IMR-90 (cell line): ENCODE measurements at regions of chr1 and their contacts with region 1.

Region 1: DNA sequence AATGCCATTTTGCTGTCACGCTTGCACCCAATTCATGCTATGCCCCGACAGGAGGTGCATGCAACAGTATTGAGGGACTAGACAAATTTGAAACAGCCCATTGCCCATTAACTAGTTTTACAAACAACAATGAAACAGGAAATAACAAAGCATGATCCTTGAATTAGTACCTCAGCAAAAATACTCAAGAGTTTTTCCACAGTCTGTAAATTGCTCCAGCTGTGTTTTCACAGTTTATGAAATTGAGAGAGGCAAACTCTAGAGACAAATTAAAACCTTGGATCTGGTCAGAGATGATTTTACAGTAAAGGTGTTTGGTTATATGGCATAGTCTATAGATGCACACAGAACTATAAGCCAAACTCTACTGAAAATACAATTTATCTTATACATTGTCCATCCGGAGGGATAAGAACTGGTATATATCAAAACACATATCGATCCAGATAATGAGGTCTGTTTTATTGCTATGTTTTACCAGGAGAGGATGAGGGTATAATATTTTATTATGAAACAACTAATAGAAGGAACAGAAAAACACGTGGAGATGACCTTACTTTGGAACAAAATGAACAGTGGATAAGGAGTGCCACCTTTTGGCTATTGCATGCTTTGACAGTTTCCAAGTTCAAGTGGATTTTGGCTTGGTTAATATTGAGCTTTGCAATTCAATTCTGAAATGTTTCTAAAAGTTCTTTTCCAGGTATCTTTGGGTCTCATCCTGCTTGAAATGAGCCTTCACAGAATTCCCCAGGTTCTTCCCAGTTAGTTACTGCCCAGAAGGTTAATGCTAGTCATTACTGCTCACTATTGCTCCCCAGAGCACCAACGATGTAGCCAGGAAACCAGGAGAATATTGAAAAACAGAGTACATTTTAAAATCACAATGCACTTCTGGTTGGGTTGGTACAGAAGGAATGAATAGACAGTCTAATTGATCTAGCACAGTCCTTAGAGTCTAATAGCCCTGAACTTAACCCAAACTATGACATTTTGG is 45.7 kb downstream of the ZC3H11B start:
- DNase-seq: peak; percentile 71
- ATAC-seq: peak; percentile 75
- H3K4me3 ChIP-seq: no peak overlapping the region
- H3K27ac ChIP-seq: no peak overlapping the region
- H3K4me1 ChIP-seq: no peaks in the 10 kb centered on the region
- H3K27me3 ChIP-seq: no peaks in the 10 kb centered on the region
- CTCF ChIP-seq: peak; percentile 70
- POLR2A ChIP-seq: no peak
- RAD21 ChIP-seq: peak; percentile 79

Region 2: GRCh38 chr1:218299416-218299815 is 1267.8 kb before region 1 on chr1:
- CTCF ChIA-PET with region 1: no interaction called
- POLR2A ChIA-PET with region 1: no interaction called
- dilution Hi-C with region 1: no loop called
- in situ Hi-C with region 1: no loop called
- intact Hi-C with region 1: loop called (anchors 2 kb)
- DNase-seq: peak; percentile 77
- ATAC-seq: peak; percentile 89
- H3K4me3 ChIP-seq: no peak overlapping the region
- H3K27ac ChIP-seq: no peak overlapping the region
- H3K4me1 ChIP-seq: 0 out of 2 replicates have a peak, but pooled peaks cover 1% of the 10 kb centered on the region
- H3K27me3 ChIP-seq: no peaks in the 10 kb centered on the region
- CTCF ChIP-seq: peak; percentile 65
- POLR2A ChIP-seq: no peak
- RAD21 ChIP-seq: peak; percentile 68

Region 3: GRCh38 chr1:219088778-219089557 is 478.3 kb before region 1 on chr1:
- CTCF ChIA-PET with region 1: no interaction called
- POLR2A ChIA-PET with region 1: no interaction called
- dilution Hi-C with region 1: no loop called
- in situ Hi-C with region 1: loop called (anchors 25 kb)
- intact Hi-C with region 1: loop called (anchors 10 kb)
- DNase-seq: peak; percentile 97
- ATAC-seq: peak; percentile 93
- H3K4me3 ChIP-seq: no peak overlapping the region
- H3K27ac ChIP-seq: no peak overlapping the region
- H3K4me1 ChIP-seq: peaks cover 6% of the 10 kb centered on the region
- H3K27me3 ChIP-seq: no peaks in the 10 kb centered on the region
- CTCF ChIP-seq: no peak
- POLR2A ChIP-seq: no peak
- RAD21 ChIP-seq: 0 out of 2 replicates have a peak, but pooled peaks have one; percentile 14

Region 4: GRCh38 chr1:219682788-219683187 is 115.5 kb after region 1 on chr1:
- CTCF ChIA-PET with region 1: no interaction called
- POLR2A ChIA-PET with region 1: no interaction called
- dilution Hi-C with region 1: no loop called
- in situ Hi-C with region 1: no loop called
- intact Hi-C with region 1: no loop called
- DNase-seq: no peak
- ATAC-seq: no peak
- H3K4me3 ChIP-seq: no peak overlapping the region
- H3K27ac ChIP-seq: no peak overlapping the region
- H3K4me1 ChIP-seq: no peaks in the 10 kb centered on the region
- H3K27me3 ChIP-seq: no peaks in the 10 kb centered on the region
- CTCF ChIP-seq: no peak
- POLR2A ChIP-seq: no peak
- RAD21 ChIP-seq: no peak